Esophagus muscularis mucosa (tissue), 4 donors: ENCODE measurements at regions of chr1 and their contacts with region 1.

Region 1: DNA sequence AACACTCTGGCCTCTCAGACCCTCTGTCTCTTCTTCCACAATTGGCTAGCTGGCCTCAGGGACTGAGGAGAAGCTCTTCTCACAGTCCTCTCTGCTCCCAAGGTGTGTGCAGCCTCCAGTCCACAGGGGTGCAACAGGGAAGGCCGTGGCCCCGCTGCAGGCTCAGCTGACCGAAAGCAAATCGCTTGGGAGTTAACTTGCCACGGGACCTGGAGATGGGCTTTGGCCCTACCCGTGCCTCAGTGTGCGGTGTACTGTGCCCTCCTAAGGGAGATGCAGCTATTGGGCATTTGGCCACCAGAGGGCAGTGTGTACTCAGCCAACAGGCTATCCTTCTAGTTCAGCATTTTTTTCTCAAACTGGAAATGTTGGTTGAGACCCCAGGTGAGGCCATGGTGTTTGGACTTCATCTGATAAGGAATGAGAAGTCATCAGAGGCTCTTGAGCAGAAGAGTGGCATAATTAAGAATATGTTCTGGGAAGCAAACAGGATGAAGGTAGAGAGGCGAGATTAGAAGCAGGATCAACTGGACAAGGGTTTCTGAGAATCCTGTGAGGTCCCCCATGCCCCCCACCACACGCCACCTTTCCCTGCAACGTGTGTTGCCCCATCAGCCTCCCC is 42.5 kb upstream of the TMEM125 start:
- DNase-seq: peak; percentile 95
- H3K4me3 ChIP-seq: no peak overlapping the region
- H3K27ac ChIP-seq: no peak overlapping the region
- H3K4me1 ChIP-seq: peaks cover 0 to 14% (median 10%) of the 10 kb centered on the region in 4 donors
- H3K27me3 ChIP-seq: no peaks in the 10 kb centered on the region
- CTCF ChIP-seq: peak; percentile 92 to 95 (median 92)
- EP300 ChIP-seq: no peak
- POLR2A ChIP-seq: no peak

Region 2: DNA sequence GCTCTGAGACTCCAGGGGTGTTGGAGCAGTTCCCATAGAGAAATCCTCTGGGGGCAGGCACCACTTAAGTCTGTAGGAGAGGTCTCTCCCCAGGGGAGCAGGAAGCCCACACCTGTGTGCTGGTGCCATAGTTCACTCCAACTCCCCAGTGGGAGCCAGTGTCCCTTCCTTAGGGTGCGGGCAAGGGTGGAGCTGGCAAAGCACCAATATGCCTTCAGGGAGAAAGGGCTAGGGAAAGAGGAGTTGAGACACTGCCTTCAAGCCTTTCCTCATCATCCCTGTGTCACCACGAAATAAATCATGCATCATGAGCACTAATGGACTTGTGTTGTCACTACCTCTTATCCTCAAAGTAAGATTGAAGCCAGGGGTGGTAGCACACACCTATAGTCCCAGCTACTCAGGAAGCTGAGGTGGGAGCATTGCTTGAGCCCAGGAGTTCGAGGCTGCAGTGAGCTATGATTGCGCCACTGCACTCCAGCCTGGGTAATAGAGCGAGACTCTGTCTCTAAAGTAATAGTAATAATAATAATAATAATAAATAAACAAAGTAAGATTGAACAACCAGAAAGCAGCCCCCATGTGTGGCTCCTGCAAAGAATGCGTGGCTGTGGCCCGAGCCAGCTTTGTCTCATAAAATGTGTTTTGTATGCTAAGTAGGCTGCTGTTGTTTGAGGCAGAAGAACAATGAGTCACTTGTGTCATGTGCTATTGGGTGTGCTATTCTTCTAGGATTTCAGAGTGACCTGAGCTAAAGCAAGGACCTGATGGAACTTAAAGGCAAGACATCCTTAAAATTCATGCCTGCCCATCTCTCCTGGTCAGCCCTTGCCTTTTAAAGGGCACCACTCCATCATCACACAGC is 66.9 kb after region 1 on chr1:
- intact Hi-C with region 1: no loop called
- DNase-seq: no peak
- H3K4me3 ChIP-seq: no peak overlapping the region
- H3K27ac ChIP-seq: peak overlapping the region; percentile 69 to 84 (median 79)
- H3K4me1 ChIP-seq: peaks cover 38 to 45% (median 43%) of the 10 kb centered on the region in 4 donors
- H3K27me3 ChIP-seq: no peaks in the 10 kb centered on the region
- CTCF ChIP-seq: no peak
- EP300 ChIP-seq: no peak
- POLR2A ChIP-seq: no peak

Region 3: DNA sequence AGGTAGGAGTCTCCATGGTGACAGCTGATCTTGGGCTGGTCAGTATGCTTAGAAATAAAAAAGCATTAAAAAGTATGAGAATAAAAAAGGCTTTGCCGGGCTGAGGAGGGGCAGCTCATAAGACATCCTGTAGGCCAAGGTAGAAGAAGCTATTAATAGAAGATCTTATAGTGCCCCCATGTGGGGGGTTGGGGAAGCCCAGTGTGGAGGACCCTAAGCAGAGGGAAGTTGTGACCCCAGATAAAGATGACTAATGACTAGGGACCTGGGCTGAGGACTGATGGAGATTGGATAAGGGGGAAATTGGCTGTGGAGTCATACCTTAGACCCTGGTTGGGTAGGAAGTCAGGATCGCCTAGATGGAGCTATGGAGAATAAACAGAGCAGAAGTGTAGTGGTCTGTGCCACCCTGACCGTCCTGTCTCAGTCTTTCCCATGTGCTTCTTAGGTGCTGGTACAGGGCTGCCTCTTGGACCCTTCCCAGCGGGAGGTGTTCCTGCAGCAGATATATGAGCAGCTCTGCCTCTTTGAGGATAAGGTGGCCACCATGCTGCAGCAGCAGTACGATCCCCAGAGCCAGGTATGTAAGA is 187.5 kb after region 1 on chr1:
- intact Hi-C with region 1: loop called (anchors 2 kb)
- DNase-seq: no peak
- H3K4me3 ChIP-seq: no peak overlapping the region
- H3K27ac ChIP-seq: no peak overlapping the region
- H3K4me1 ChIP-seq: peaks cover 0 to 5% (median 0%) of the 10 kb centered on the region in 4 donors
- H3K27me3 ChIP-seq: no peaks in the 10 kb centered on the region
- CTCF ChIP-seq: peak; percentile 56 to 68 (median 59)
- EP300 ChIP-seq: no peak
- POLR2A ChIP-seq: no peak